CD8-positive, alpha-beta T cell (primary cell): ENCODE measurements at regions of chr4 and their contacts with region 1.

Region 1: GRCh38 chr4:108570993-108571569 is 49.3 kb upstream of the RPL34 start:
- DNase-seq: no peak
- ATAC-seq: no peak
- H3K4me3 ChIP-seq: no peak overlapping the region
- H3K4me3 Mint-ChIP-seq: no peak overlapping the region
- H3K27ac ChIP-seq: no peak overlapping the region
- H3K27ac Mint-ChIP-seq: no peak overlapping the region
- H3K4me1 ChIP-seq: peaks cover 26% of the 10 kb centered on the region
- H3K4me1 Mint-ChIP-seq: peaks cover 31% of the 10 kb centered on the region
- H3K27me3 ChIP-seq: peaks cover 0 to 2% of the 10 kb centered on the region in 2 experiments
- H3K27me3 Mint-ChIP-seq: no peaks in the 10 kb centered on the region
- CTCF ChIP-seq: no peak

Region 2: GRCh38 chr4:107757864-107758476 is 813.1 kb before region 1 on chr4:
- CTCF ChIA-PET with region 1: interaction called, 3 read pairs
- POLR2A ChIA-PET with region 1: no interaction called
- intact Hi-C with region 1: loop called in 1 of 2 experiments (anchors 10 kb)
- DNase-seq: peak in 2 of 9 experiments; percentile 15 to 40
- ATAC-seq: no peak
- H3K4me3 ChIP-seq: no peak overlapping the region
- H3K4me3 Mint-ChIP-seq: no peak overlapping the region
- H3K27ac ChIP-seq: no peak overlapping the region
- H3K27ac Mint-ChIP-seq: no peak overlapping the region
- H3K4me1 ChIP-seq: no peaks in the 10 kb centered on the region
- H3K4me1 Mint-ChIP-seq: no peaks in the 10 kb centered on the region
- H3K27me3 ChIP-seq: no peaks in the 10 kb centered on the region
- H3K27me3 Mint-ChIP-seq: peaks cover 10% of the 10 kb centered on the region
- CTCF ChIP-seq: peak; percentile 76

Region 3: DNA sequence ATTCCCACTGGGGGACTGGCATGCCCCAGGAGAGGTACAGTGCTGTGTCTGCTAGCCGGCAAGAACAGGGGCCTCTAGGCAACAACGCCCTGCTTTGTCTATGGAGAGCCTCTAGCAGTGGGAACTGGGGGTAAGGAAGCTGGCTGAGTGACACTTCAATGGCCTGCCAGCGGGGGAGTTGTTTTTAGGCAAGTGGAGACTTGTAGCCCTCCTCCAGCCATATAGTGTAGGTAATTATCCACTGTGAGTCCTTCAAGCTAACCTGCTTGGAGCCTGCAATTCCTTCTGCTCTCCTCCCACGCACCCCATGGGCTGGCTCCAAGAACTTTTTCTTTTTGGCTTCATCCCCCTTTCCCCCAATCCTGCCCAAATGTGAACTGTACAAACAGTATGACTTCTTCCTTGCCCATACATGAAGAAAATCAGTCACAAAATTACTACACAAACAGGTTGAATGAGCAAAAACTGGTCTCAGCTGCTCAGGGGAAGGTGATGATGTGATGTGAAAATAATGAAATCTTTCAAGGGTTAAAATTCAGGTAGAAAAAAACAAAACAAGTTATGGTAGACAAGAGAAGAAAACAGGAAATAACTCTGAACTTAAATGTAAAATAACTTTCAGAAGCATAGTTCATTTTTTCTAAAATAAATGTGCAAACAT is 435.4 kb before region 1 on chr4:
- CTCF ChIA-PET with region 1: interaction called, 11 read pairs
- POLR2A ChIA-PET with region 1: no interaction called
- intact Hi-C with region 1: no loop called
- DNase-seq: peak in 1 of 9 experiments; percentile 22
- ATAC-seq: peak; percentile 10
- H3K4me3 ChIP-seq: peak overlapping the region; percentile 4 to 26
- H3K4me3 Mint-ChIP-seq: peak overlapping the region; percentile 65
- H3K27ac ChIP-seq: peak overlapping the region; percentile 26 to 30
- H3K27ac Mint-ChIP-seq: peak overlapping the region; percentile 94
- H3K4me1 ChIP-seq: peaks cover 98% of the 10 kb centered on the region
- H3K4me1 Mint-ChIP-seq: peaks cover 85% of the 10 kb centered on the region
- H3K27me3 ChIP-seq: no peaks in the 10 kb centered on the region
- H3K27me3 Mint-ChIP-seq: no peaks in the 10 kb centered on the region
- CTCF ChIP-seq: no peak

Region 4: DNA sequence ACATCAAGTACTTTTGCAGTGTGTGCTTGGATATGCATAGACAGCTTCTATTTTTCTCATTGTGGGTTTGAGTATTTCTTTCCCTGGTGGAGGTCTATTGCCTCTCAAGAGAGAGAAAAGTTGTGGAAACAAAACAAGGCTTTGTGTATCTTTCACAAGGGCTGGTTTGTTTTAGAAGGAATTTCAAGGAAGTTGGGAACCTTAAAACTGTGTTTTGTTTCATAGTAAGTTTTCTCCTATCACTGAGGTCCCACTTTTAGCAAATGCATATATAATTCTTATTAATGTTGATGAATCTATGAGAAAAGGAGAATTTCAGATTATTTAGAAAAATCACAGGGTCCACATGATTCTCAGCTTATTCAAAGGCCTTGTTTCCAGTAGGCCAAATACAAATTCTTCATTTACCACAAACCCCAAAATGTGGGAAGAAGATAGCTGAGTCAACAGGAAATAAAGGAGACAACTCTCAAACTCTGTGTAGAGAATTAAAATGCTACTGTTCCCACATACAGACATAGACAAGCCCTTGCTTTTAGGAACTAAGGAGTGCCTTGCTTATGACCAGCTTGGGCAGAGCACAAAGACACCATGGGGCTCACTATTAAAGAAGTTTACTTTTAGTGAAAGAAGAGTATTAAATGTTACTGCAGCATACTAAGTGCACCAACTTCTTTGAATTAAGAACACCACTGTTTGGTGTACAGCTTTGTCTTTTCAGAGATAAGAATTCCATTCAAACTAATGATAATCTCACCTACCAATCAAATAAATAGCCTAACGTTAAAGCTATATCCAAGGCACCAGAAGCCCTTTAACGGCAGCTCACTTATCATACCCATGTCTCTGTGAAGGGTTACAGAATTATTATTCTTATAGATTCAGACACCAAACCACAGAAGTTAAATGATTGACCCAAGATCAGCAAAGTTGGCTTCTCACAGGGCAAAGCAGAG is 224.9 kb before region 1 on chr4:
- CTCF ChIA-PET with region 1: interaction called, 10 read pairs
- POLR2A ChIA-PET with region 1: interaction called, 5 read pairs
- intact Hi-C with region 1: no loop called
- DNase-seq: no peak
- ATAC-seq: no peak
- H3K4me3 ChIP-seq: no peak overlapping the region
- H3K4me3 Mint-ChIP-seq: no peak overlapping the region
- H3K27ac ChIP-seq: no peak overlapping the region
- H3K27ac Mint-ChIP-seq: peak overlapping the region; percentile 19
- H3K4me1 ChIP-seq: peaks cover 24% of the 10 kb centered on the region
- H3K4me1 Mint-ChIP-seq: peaks cover 46% of the 10 kb centered on the region
- H3K27me3 ChIP-seq: no peaks in the 10 kb centered on the region
- H3K27me3 Mint-ChIP-seq: no peaks in the 10 kb centered on the region
- CTCF ChIP-seq: no peak

Region 5: DNA sequence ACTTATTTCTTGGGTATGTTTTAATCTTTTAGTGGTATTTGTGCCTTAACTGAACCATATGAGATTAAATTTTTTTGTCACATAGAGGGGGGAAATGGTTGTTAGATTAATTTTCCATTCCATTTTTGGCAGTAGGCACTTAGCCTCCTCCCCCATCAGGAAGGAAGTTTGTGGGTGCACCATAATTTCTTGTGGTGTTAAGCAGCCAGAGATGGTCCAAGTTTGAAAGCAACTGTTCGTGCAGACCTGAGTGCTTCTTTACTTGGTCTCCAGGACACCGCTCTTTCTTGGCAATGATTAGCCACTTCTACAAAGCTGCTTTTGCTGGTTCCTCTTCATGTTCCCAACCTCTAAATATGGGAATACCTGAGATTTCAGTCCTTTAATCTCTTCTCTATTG is 43.4 kb before region 1 on chr4:
- CTCF ChIA-PET with region 1: interaction called, 16 read pairs
- POLR2A ChIA-PET with region 1: no interaction called
- intact Hi-C with region 1: loop called in 1 of 2 experiments (anchors 5 kb)
- DNase-seq: peak in 6 of 9 experiments; percentile 11 to 61 (median 30)
- ATAC-seq: peak; percentile 64
- H3K4me3 ChIP-seq: peak overlapping the region; percentile 4 to 6
- H3K4me3 Mint-ChIP-seq: peak overlapping the region; percentile 59
- H3K27ac ChIP-seq: peak overlapping the region in 1 of 2 experiments; percentile 11
- H3K27ac Mint-ChIP-seq: peak overlapping the region; percentile 66
- H3K4me1 ChIP-seq: peaks cover 66% of the 10 kb centered on the region
- H3K4me1 Mint-ChIP-seq: peaks cover 64% of the 10 kb centered on the region
- H3K27me3 ChIP-seq: no peaks in the 10 kb centered on the region
- H3K27me3 Mint-ChIP-seq: no peaks in the 10 kb centered on the region
- CTCF ChIP-seq: no peak

Region 6: GRCh38 chr4:109406338-109406931 is 835.4 kb after region 1 on chr4:
- CTCF ChIA-PET with region 1: no interaction called
- POLR2A ChIA-PET with region 1: no interaction called
- intact Hi-C with region 1: loop called in 1 of 2 experiments (anchors 5 kb)
- DNase-seq: peak in 4 of 9 experiments; percentile 26 to 73 (median 46)
- ATAC-seq: peak; percentile 57
- H3K4me3 ChIP-seq: no peak overlapping the region
- H3K4me3 Mint-ChIP-seq: no peak overlapping the region
- H3K27ac ChIP-seq: no peak overlapping the region
- H3K27ac Mint-ChIP-seq: no peak overlapping the region
- H3K4me1 ChIP-seq: no peaks in the 10 kb centered on the region
- H3K4me1 Mint-ChIP-seq: no peaks in the 10 kb centered on the region
- H3K27me3 ChIP-seq: no peaks in the 10 kb centered on the region
- H3K27me3 Mint-ChIP-seq: peaks cover 2% of the 10 kb centered on the region
- CTCF ChIP-seq: peak; percentile 72